ENCODE measurements at regions of chr4 and their contacts with region 1.

Region 1: DNA sequence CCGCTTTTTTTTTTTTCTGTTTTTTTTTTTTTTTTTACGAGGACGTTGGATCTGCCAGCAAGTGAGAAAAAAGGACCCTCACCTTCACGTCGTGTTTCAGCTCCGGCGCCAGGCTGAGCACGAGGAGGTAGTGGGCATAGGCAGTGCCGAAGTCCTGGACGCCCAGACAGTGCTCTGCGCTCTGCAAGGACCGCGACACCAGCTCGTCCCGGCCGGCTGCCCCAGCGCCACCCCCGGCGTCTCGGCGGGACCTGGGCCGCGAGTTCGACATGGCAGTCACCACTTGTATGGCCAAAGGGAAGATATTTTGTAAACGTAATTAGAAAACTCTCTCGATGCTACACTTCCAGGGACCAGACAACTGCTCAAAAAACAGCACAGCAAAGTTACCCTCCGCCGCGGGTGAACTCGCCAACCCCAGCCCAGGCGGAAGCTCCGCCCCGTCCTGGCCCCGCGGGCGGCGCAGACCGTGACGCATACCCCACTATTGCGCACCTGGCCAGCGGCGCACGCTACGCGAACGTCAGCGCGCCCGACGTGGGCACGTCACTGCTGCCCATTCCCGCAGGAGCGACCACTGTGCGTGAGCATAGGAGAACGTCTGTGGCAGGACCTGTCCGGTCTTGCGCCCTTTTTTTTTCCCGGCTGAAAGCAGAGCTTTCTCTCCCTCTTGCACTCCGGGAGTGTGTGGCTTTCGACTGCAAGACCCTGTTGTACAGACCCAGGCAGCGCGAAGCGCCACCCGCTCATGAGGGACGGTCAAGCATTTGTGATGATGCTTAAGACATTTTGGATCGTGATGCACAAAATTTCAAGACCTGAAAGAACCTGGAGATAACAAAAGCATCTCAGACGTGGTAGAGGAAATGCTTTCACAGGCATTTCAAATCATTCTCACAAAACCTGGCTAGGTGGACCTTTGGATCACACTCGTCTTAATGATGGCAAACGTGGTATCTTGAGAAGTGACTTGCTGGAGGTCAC is at the start of gene PRMT9:
- DNase-seq: peak; percentile 79 to 90 (median 85)
- ATAC-seq: peak; percentile 98
- H3K4me3 ChIP-seq: peak within 1 kb of the TSS; percentile 97
- H3K4me3 Mint-ChIP-seq: peak within 1 kb of the TSS; percentile 89 to 100 (median 97)
- H3K27ac ChIP-seq: peak within 1 kb of the TSS; percentile 95
- H3K27ac Mint-ChIP-seq: peak within 1 kb of the TSS; percentile 86 to 99 (median 97)
- H3K4me1 ChIP-seq: peaks cover 4 to 16% of the 10 kb centered on the region in 2 donors
- H3K4me1 Mint-ChIP-seq: peaks cover 15 to 47% (median 38%) of the 10 kb centered on the region in 7 donors
- H3K27me3 ChIP-seq: no peaks in the 10 kb centered on the region
- H3K27me3 Mint-ChIP-seq: peaks cover 0 to 11% (median 2%) of the 10 kb centered on the region in 5 donors
- total RNA-seq, gene PRMT9: 9.7 to 15.9 (median 10.8) TPM

Region 2: GRCh38 chr4:146833530-146833929 is 850.5 kb before region 1 on chr4:
- CTCF ChIA-PET with region 1: no interaction called
- POLR2A ChIA-PET with region 1: no interaction called
- intact Hi-C with region 1: no loop called
- DNase-seq: no peak
- ATAC-seq: no peak
- H3K4me3 ChIP-seq: no peak overlapping the region
- H3K4me3 Mint-ChIP-seq: no peak overlapping the region
- H3K27ac ChIP-seq: no peak overlapping the region
- H3K27ac Mint-ChIP-seq: no peak overlapping the region
- H3K4me1 ChIP-seq: no peaks in the 10 kb centered on the region
- H3K4me1 Mint-ChIP-seq: no peaks in the 10 kb centered on the region
- H3K27me3 ChIP-seq: no peaks in the 10 kb centered on the region
- H3K27me3 Mint-ChIP-seq: peaks cover 2 to 18% (median 7%) of the 10 kb centered on the region in 5 donors

Region 3: GRCh38 chr4:147638942-147639341 is 45.1 kb before region 1 on chr4:
- CTCF ChIA-PET with region 1: no interaction called
- POLR2A ChIA-PET with region 1: no interaction called
- intact Hi-C with region 1: loop called in 1 of 2 experiments (anchors 5 kb)
- DNase-seq: no peak
- ATAC-seq: no peak
- H3K4me3 ChIP-seq: no peak overlapping the region
- H3K4me3 Mint-ChIP-seq: peak overlapping the region in 5 of 10 donors; percentile 15 to 68 (median 34)
- H3K27ac ChIP-seq: peak overlapping the region; percentile 0
- H3K27ac Mint-ChIP-seq: peak overlapping the region in 8 of 9 donors; percentile 10 to 87 (median 65)
- H3K4me1 ChIP-seq: no peaks in the 10 kb centered on the region
- H3K4me1 Mint-ChIP-seq: peaks cover 10 to 30% (median 25%) of the 10 kb centered on the region in 7 donors
- H3K27me3 ChIP-seq: no peaks in the 10 kb centered on the region
- H3K27me3 Mint-ChIP-seq: no peaks in the 10 kb centered on the region

Region 4: DNA sequence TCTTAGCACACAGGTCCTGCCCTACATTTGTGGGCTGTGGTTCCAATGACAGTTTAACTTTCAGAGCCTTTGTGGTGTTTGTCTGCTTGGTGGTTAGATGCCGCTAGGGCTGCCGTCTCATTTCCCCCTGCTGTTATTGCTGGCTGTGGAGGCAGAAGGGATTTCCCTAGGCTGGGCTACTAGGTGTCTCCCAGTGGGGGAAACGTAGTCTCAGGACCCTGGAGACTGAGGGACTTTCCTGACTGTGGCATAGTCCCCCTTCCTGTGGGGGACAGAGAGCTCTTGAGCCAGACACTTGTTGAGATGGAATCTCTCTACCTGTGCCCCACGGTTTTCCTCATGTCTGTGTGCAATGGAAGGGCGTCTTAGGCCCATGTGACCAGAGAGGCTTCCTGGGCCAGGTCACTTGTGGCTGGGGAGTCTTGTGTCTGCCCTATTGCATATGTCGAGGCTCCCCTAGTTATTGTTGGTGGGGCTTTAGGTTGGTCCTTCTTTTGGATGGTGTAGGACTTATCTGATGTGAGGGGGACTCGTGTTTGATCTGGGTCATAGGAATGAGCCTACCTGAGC is 116.1 kb after region 1 on chr4:
- CTCF ChIA-PET with region 1: no interaction called
- POLR2A ChIA-PET with region 1: interaction called, 3 read pairs
- intact Hi-C with region 1: loop called in 1 of 2 experiments (anchors 1 kb)
- DNase-seq: peak in 8 of 9 donors; percentile 5 to 64 (median 24)
- ATAC-seq: peak; percentile 95
- H3K4me3 ChIP-seq: no peak overlapping the region
- H3K4me3 Mint-ChIP-seq: peak overlapping the region in 2 of 10 donors; percentile 40 to 81
- H3K27ac ChIP-seq: no peak overlapping the region
- H3K27ac Mint-ChIP-seq: peak overlapping the region in 5 of 9 donors; percentile 22 to 79 (median 45)
- H3K4me1 ChIP-seq: peaks cover 7 to 15% of the 10 kb centered on the region in 2 donors
- H3K4me1 Mint-ChIP-seq: peaks cover 9 to 53% (median 12%) of the 10 kb centered on the region in 7 donors
- H3K27me3 ChIP-seq: no peaks in the 10 kb centered on the region
- H3K27me3 Mint-ChIP-seq: peaks cover 3 to 27% (median 7%) of the 10 kb centered on the region in 5 donors